ENCODE measurements at regions of chr2 and their contacts with region 1.

Region 1: DNA sequence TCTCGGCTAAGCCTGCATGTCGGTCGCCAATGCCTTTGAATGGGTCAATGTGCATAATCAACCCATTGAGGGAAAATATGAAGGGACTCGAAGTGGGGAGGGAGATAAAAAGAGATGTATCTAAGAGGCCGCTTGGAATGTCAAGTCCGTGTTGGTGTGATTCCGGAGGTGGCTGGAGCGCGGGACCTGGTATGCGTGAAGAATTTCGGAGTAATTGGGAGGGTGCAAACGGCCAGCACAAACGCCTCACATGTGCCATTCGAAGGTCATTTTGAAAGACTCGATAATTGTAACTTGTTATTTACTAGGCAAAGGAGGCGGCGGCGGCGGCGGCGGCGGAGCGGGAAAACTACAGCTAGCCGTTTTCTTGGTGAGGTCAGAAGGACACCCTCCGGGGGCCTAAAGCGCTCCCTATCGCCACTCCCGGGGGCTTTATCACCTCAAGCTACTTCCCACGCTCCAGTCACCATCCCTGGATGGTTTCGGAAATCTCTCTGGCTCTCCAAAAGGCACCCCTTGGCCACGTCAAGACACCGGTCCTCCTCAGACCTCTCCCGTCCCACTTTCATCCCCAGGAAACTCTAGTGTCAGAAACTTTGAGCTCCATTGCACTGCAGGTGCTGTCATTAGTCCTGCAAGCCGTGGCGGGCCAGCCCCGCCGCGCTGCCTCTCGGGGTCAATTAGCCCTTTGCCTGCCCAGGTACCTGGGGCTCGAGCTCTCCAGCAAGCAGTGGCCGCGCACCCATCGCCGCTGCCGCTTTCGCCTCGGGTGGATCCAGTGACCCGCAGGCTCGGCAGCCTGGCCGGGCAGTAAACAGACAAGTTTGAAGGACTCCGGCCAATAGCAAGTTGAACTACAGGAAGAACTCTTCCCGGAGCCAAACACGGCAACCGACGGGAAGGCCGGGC is 1.5 kb downstream of the ERBB4 start:
- DNase-seq: peak; percentile 18 to 57 (median 57)
- ATAC-seq: peak; percentile 27 to 35
- H3K4me3 ChIP-seq: peak overlapping the region; percentile 96
- H3K27ac ChIP-seq: peak overlapping the region; percentile 60
- H3K4me1 ChIP-seq: no peaks in the 10 kb centered on the region
- H3K27me3 ChIP-seq: no peaks in the 10 kb centered on the region

Region 2: GRCh38 chr2:212157012-212157411 is 380.1 kb before region 1 on chr2:
- intact Hi-C with region 1: loop called in 1 of 4 experiments (anchors 10 kb)
- DNase-seq: no peak
- ATAC-seq: no peak
- H3K4me3 ChIP-seq: no peak overlapping the region
- H3K27ac ChIP-seq: no peak overlapping the region
- H3K4me1 ChIP-seq: no peaks in the 10 kb centered on the region
- H3K27me3 ChIP-seq: no peaks in the 10 kb centered on the region